ENCODE measurements at regions of chr11 and their contacts with region 1.

Region 1: GRCh38 chr11:73965076-73965860 is 14.4 kb downstream of the DNAJB13 start:
- DNase-seq: no peak
- H3K4me3 ChIP-seq: no peak overlapping the region
- H3K4me3 Mint-ChIP-seq: peak overlapping the region in 1 of 8 donors; percentile 52
- H3K27ac ChIP-seq: no peak overlapping the region
- H3K27ac Mint-ChIP-seq: peak overlapping the region in 4 of 7 donors; percentile 37 to 48 (median 41)
- H3K4me1 ChIP-seq: peaks cover 45% of the 10 kb centered on the region
- H3K4me1 Mint-ChIP-seq: peaks cover 30 to 54% (median 39%) of the 10 kb centered on the region in 4 donors
- H3K27me3 ChIP-seq: no peaks in the 10 kb centered on the region
- H3K27me3 Mint-ChIP-seq: no peaks in the 10 kb centered on the region

Region 2: DNA sequence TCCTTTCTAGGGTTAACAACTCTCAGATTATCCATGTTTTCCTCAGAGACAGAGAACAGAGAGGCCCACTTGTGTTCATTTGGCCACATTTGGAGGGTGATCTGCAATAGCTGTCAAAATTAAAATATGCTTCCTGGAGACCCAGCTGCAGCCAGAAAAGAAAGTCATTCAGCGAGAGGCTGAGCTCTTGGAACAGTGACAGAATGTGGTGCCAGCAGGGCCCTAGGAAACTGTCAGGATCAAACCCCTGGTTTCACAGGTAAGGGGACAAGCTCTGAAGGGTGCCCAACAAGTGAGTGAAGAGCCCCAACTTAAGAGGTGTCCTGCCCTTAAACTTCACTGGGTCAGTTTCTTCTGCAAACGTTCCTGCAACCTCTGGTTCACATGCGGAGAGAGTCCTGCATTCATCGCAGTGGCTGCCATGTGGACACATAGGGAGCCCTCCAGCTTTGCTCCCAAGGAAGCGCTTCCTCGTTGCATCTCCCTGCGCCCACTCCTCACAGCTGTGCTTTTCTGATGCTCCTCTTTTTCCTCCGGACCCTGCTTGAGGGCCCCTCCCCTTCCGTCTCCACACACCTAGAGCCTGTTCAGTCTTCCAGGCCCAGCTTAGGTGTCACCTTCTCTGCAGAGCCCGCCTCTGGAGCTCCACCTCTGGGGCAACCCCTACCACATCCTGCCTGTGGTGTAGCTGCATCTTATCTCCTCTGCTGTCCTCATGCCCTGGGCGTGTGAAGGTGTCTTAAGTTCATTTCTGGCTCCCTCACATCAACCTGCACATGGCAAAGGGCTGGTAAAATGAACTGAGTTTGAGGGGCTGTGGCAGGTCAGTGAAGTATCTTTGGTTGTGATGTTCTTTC is 39.7 kb after region 1 on chr11:
- CTCF ChIA-PET with region 1: interaction called, 15 read pairs
- POLR2A ChIA-PET with region 1: interaction called, 2,221 read pairs
- intact Hi-C with region 1: loop called (anchors 1 kb)
- DNase-seq: peak; percentile 88 to 95 (median 91)
- H3K4me3 ChIP-seq: peak overlapping the region; percentile 18 to 50
- H3K4me3 Mint-ChIP-seq: peak overlapping the region; percentile 79 to 91 (median 86)
- H3K27ac ChIP-seq: peak overlapping the region; percentile 60
- H3K27ac Mint-ChIP-seq: peak overlapping the region; percentile 91 to 99 (median 97)
- H3K4me1 ChIP-seq: peaks cover 72% of the 10 kb centered on the region
- H3K4me1 Mint-ChIP-seq: peaks cover 55 to 82% (median 71%) of the 10 kb centered on the region in 4 donors
- H3K27me3 ChIP-seq: no peaks in the 10 kb centered on the region
- H3K27me3 Mint-ChIP-seq: no peaks in the 10 kb centered on the region

Region 3: DNA sequence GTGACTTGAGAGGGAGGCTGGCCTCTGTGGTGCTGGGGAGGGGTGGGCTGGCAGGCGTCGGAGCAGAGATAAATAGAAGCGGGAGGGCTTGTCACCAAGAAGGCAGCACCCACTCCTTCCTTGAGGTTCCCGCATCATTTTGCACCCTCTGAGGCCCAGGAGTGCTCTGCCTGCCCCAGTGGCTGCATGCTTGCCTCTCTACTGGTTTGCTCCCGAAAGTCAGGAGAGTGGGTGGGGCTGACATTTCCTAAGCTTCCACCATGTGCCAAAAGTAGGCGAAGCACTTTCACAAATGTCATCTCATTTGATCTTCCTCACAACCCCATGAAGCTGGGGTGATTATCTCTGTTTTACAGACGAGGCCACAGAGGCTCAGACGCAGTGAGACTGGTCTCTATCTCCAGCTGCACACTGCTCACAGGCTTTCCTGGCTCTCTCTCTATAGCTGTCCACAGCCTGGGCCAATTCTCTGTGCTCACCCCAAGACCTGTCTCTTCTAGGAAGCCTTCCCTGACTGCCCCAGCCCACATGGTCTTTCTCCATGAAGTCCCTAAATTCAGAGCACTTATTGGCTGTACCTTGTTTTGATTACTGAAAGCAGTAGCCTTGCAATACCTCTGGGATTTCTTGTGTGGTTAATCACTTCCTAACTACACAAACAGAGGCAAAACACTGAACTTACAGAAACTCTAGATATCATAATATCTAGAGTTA is 46.2 kb after region 1 on chr11:
- CTCF ChIA-PET with region 1: interaction called, 12 read pairs
- POLR2A ChIA-PET with region 1: interaction called, 2,221 read pairs
- intact Hi-C with region 1: no loop called
- DNase-seq: peak; percentile 62 to 76 (median 69)
- H3K4me3 ChIP-seq: peak overlapping the region; percentile 10 to 39
- H3K4me3 Mint-ChIP-seq: peak overlapping the region; percentile 41 to 87 (median 68)
- H3K27ac ChIP-seq: peak overlapping the region; percentile 73
- H3K27ac Mint-ChIP-seq: peak overlapping the region; percentile 94 to 99 (median 96)
- H3K4me1 ChIP-seq: peaks cover 100% of the 10 kb centered on the region
- H3K4me1 Mint-ChIP-seq: peaks cover 27 to 95% (median 77%) of the 10 kb centered on the region in 4 donors
- H3K27me3 ChIP-seq: no peaks in the 10 kb centered on the region
- H3K27me3 Mint-ChIP-seq: no peaks in the 10 kb centered on the region

Region 4: GRCh38 chr11:74030723-74031676 is 65.7 kb after region 1 on chr11:
- CTCF ChIA-PET with region 1: interaction called, 20 read pairs
- POLR2A ChIA-PET with region 1: interaction called, 38 read pairs
- intact Hi-C with region 1: loop called (anchors 1 kb)
- DNase-seq: no peak
- H3K4me3 ChIP-seq: no peak overlapping the region
- H3K4me3 Mint-ChIP-seq: peak overlapping the region; percentile 54 to 83 (median 70)
- H3K27ac ChIP-seq: peak overlapping the region; percentile 50
- H3K27ac Mint-ChIP-seq: peak overlapping the region; percentile 49 to 94 (median 91)
- H3K4me1 ChIP-seq: peaks cover 29% of the 10 kb centered on the region
- H3K4me1 Mint-ChIP-seq: peaks cover 30 to 48% (median 36%) of the 10 kb centered on the region in 4 donors
- H3K27me3 ChIP-seq: no peaks in the 10 kb centered on the region
- H3K27me3 Mint-ChIP-seq: no peaks in the 10 kb centered on the region

Region 5: DNA sequence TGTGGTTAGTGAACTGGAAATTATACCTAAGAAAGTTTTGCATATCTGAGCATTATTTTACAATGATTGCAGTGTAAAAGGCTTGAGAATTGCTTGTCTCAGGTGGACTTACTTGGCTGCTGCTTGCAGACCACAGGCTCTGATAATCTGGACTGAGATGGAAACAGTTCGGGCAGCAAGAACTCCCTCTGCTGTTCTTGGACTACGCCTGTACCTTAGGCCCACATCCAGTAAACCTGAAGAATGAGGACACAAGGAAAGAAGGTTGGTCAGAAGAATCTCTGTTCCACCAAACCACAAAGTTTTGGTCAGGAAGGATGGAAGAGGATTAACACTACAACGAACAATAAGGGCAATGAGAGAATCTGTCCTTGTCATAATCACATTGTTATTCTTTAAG is 125.4 kb after region 1 on chr11:
- CTCF ChIA-PET with region 1: interaction called, 5 read pairs
- POLR2A ChIA-PET with region 1: no interaction called
- intact Hi-C with region 1: loop called (anchors 1 kb)
- DNase-seq: peak in 4 of 5 donors; percentile 4 to 11 (median 8)
- H3K4me3 ChIP-seq: no peak overlapping the region
- H3K4me3 Mint-ChIP-seq: no peak overlapping the region
- H3K27ac ChIP-seq: no peak overlapping the region
- H3K27ac Mint-ChIP-seq: no peak overlapping the region
- H3K4me1 ChIP-seq: peaks cover 9% of the 10 kb centered on the region
- H3K4me1 Mint-ChIP-seq: peaks cover 4 to 10% (median 7%) of the 10 kb centered on the region in 4 donors
- H3K27me3 ChIP-seq: no peaks in the 10 kb centered on the region
- H3K27me3 Mint-ChIP-seq: no peaks in the 10 kb centered on the region

Region 6: DNA sequence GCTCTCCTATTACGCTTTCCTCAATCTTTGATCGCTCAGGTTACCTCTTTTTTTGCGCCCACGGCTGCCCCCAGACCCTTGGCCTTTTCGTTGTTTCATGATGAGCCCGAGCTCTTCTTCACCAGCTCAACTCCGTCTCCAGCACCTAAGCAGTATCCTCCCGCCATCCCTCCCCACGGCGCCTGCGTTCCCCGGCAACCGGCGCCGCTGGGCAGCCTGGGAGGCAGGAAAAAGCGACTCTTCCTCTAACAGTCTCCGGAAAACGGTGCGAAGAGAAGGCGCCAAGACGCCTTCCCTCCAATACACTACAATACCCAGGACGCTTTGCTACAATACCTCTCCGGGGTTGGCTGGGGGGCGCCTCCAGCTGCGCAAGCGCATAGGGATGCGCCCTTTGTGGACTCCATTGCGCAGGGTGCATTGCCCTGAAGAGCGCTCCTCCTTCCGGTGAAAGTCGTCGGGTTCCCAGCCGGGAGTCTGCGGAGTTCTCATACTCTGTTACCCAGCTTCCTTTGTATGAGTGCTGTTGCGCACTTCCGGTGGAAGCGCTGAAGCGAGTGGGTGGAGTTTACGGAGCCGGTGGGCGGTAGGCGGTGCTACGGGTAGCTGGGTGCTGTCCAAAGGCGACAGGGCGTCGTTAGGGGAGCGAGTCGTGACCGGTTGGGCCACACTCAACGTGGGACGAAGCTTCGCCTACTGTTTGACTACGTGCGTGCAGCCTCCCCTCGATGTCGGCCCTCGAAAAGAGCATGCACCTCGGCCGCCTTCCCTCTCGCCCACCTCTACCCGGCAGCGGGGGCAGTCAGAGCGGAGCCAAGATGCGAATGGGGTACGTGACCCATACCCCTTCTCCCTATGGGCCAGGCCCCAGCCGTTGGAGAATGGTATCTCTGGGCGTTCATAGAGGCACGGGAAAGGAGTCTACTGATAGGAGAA is 205.7 kb after region 1 on chr11 and contains the starts of genes C2CD3 and PPME1:
- CTCF ChIA-PET with region 1: no interaction called
- POLR2A ChIA-PET with region 1: interaction called, 32 read pairs
- intact Hi-C with region 1: loop called (anchors 1 kb)
- DNase-seq: peak; percentile 97 to 99 (median 99)
- H3K4me3 ChIP-seq: peak within 1 kb of the TSS; percentile 74 to 86
- H3K4me3 Mint-ChIP-seq: no peak within 1 kb of the TSS
- H3K27ac ChIP-seq: peak within 1 kb of the TSS; percentile 70
- H3K27ac Mint-ChIP-seq: no peak within 1 kb of the TSS
- H3K4me1 ChIP-seq: peaks cover 40% of the 10 kb centered on the region
- H3K4me1 Mint-ChIP-seq: peaks cover 18 to 22% (median 18%) of the 10 kb centered on the region in 4 donors
- H3K27me3 ChIP-seq: no peaks in the 10 kb centered on the region
- H3K27me3 Mint-ChIP-seq: no peaks in the 10 kb centered on the region
- total RNA-seq, gene C2CD3: 41.9 to 52.7 TPM
- total RNA-seq, gene PPME1: 20.7 to 21.9 TPM

Region 7: GRCh38 chr11:74255741-74256369 is 290.6 kb after region 1 on chr11:
- CTCF ChIA-PET with region 1: interaction called, 4 read pairs
- POLR2A ChIA-PET with region 1: no interaction called
- intact Hi-C with region 1: loop called (anchors 10 kb)
- DNase-seq: peak; percentile 39 to 62 (median 52)
- H3K4me3 ChIP-seq: no peak overlapping the region
- H3K4me3 Mint-ChIP-seq: no peak overlapping the region
- H3K27ac ChIP-seq: no peak overlapping the region
- H3K27ac Mint-ChIP-seq: peak overlapping the region in 2 of 7 donors; percentile 15 to 23
- H3K4me1 ChIP-seq: no peaks in the 10 kb centered on the region
- H3K4me1 Mint-ChIP-seq: peaks cover 0 to 7% (median 4%) of the 10 kb centered on the region in 4 donors
- H3K27me3 ChIP-seq: no peaks in the 10 kb centered on the region
- H3K27me3 Mint-ChIP-seq: no peaks in the 10 kb centered on the region